Activated naive CD4-positive, alpha-beta T cell treated with anti-CD3 and anti-CD28 coated beads for 36 hours (primary cell): ENCODE measurements at regions of chr2 and their contacts with region 1.

Region 1: GRCh38 chr2:171160119-171160955 is at the start of gene TLK1:
- DNase-seq: peak; percentile 75
- H3K4me3 Mint-ChIP-seq: peak within 1 kb of the TSS; percentile 90
- H3K27ac Mint-ChIP-seq: peak within 1 kb of the TSS; percentile 93
- H3K4me1 Mint-ChIP-seq: peaks cover 57% of the 10 kb centered on the region
- H3K27me3 Mint-ChIP-seq: no peaks in the 10 kb centered on the region
- total RNA-seq, gene TLK1: 54.5 to 55.9 TPM

Region 2: DNA sequence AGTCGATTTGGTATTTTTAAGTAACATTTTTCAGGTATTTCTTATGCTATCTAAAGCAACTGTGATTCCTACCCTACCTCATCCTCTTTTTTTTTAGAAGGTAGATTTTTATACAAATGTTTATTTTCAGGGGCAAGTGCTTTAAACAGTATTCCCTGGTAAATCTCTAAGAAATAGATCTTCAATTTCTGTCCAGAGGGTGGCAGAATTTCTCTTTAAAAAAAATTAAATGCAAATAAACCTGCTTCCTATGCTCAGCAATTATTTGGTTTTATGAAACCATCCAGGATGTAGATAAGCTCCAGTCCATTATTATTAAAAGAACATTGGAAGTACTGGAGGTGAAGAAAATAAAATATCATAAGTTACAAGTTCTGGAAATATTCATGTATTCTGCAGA is 790.4 kb before region 1 on chr2:
- CTCF ChIA-PET with region 1: no interaction called
- intact Hi-C with region 1: no loop called
- DNase-seq: no peak
- H3K4me3 Mint-ChIP-seq: no peak overlapping the region
- H3K27ac Mint-ChIP-seq: no peak overlapping the region
- H3K4me1 Mint-ChIP-seq: peaks cover 29% of the 10 kb centered on the region
- H3K27me3 Mint-ChIP-seq: peaks cover 25% of the 10 kb centered on the region

Region 3: DNA sequence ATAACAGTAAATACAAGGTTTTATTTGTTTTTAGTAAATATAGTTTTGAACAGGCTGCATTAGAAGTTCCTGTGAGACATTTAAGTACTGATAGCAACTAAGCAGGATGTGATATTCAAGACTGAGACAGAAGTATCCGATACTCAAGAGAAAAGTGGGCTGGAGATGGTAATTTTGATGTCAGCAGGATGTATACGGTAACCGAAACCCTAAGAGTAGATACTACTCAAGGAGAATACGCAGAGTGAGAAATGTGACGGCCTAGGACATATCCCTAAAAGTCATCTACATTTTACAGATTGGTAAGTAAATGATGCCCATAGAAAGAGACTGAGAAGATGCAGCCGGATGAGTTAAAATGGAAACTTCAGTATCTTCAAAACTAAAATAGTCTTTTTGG is 115.9 kb before region 1 on chr2:
- CTCF ChIA-PET with region 1: no interaction called
- intact Hi-C with region 1: loop called (anchors 1 kb)
- DNase-seq: no peak
- H3K4me3 Mint-ChIP-seq: no peak overlapping the region
- H3K27ac Mint-ChIP-seq: peak overlapping the region; percentile 32
- H3K4me1 Mint-ChIP-seq: peaks cover 29% of the 10 kb centered on the region
- H3K27me3 Mint-ChIP-seq: no peaks in the 10 kb centered on the region

Region 4: DNA sequence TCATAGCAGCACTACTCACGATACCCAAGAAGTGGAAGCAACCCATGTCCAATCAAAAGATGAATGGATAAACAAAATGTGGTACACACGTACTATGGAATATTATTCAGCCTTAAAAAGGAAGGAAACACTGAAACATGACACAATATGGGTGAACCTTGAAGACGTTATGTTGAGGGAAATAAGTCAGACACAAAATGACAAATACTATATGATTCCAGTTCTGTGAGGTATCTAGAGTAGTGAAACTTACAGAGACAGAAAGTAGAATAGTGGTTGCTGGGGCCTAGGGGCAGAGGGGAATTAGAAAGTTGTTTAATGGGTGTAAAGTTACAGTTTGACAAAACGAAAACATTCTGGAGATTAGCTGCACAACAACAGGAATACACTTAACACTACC is 24.3 kb before region 1 on chr2:
- CTCF ChIA-PET with region 1: interaction called, 5 read pairs
- intact Hi-C with region 1: loop called (anchors 1 kb)
- DNase-seq: peak; percentile 34
- H3K4me3 Mint-ChIP-seq: no peak overlapping the region
- H3K27ac Mint-ChIP-seq: peak overlapping the region; percentile 47
- H3K4me1 Mint-ChIP-seq: peaks cover 68% of the 10 kb centered on the region
- H3K27me3 Mint-ChIP-seq: no peaks in the 10 kb centered on the region

Region 5: GRCh38 chr2:171210864-171211431 is 50.6 kb after region 1 on chr2:
- CTCF ChIA-PET with region 1: no interaction called
- intact Hi-C with region 1: loop called (anchors 2 kb)
- DNase-seq: peak; percentile 60
- H3K4me3 Mint-ChIP-seq: peak overlapping the region; percentile 51
- H3K27ac Mint-ChIP-seq: peak overlapping the region; percentile 56
- H3K4me1 Mint-ChIP-seq: peaks cover 13% of the 10 kb centered on the region
- H3K27me3 Mint-ChIP-seq: no peaks in the 10 kb centered on the region

Region 6: DNA sequence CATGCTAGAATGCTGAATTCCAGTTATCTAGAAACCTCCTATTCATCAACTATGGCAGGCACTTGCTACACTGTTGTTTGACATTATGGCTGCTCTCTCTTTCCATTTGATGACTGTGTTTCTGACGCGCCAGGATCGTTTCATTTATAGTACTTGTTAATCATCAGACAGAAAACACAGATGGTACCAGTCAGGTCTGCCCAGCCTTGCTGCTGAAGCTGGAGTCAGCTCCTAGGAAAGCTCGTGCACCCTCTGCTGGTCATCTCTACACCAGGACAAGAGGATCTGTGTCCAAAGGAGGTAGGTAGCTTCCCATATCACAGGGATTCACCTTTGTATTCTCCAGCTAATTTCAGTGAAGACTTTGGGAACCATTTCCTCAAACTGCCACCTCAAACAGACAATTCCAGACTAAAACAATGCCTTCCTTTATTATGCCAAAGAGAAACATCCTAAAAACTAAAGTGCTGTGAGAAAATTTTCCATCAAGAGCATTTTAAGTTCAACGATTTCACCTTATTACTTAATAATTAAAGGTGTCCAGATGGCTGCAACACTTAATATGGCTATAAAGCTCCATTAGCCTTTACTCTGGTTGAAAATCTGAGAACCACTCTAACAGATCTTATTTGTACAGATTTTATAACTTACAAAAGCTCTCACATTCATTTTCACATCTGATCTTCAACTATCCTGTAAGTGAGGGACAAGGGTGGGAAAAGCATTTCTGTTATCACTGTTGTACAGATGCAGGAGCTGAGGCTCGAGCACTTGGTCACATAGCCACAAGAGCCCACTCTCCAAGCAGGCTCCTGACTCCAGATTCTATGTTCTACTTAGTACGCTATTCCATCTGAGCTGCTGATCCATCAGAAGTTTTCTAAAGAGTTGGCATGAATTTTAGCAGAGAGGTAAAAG is 255.9 kb after region 1 on chr2:
- CTCF ChIA-PET with region 1: interaction called, 6 read pairs
- intact Hi-C with region 1: loop called (anchors 1 kb)
- DNase-seq: peak; percentile 96
- H3K4me3 Mint-ChIP-seq: peak overlapping the region; percentile 32
- H3K27ac Mint-ChIP-seq: peak overlapping the region; percentile 92
- H3K4me1 Mint-ChIP-seq: peaks cover 38% of the 10 kb centered on the region
- H3K27me3 Mint-ChIP-seq: no peaks in the 10 kb centered on the region